ENCODE measurements at regions of chr9 and their contacts with region 1.

Region 1: GRCh38 chr9:133992780-133993634 is 883 bp upstream of the VAV2 start:
- DNase-seq: peak; percentile 92
- ATAC-seq: peak; percentile 88

Region 2: GRCh38 chr9:133782157-133783130 is 210.6 kb before region 1 on chr9:
- intact Hi-C with region 1: loop called (anchors 1 kb)
- DNase-seq: peak; percentile 74
- ATAC-seq: no peak

Region 3: GRCh38 chr9:133792721-133793470 is 200.1 kb before region 1 on chr9:
- intact Hi-C with region 1: loop called (anchors 1 kb)
- DNase-seq: peak; percentile 90
- ATAC-seq: peak; percentile 85

Region 4: GRCh38 chr9:133916159-133916541 is 76.9 kb before region 1 on chr9:
- intact Hi-C with region 1: loop called (anchors 5 kb)
- DNase-seq: no peak
- ATAC-seq: no peak

Region 5: GRCh38 chr9:133945314-133945975 is 47.6 kb before region 1 on chr9:
- intact Hi-C with region 1: loop called (anchors 5 kb)
- DNase-seq: peak; percentile 21
- ATAC-seq: no peak

Measured in Right ventricle myocardium inferior (tissue), 1 donor.